ENCODE measurements at regions of chr4 and their contacts with region 1.

Region 1: DNA sequence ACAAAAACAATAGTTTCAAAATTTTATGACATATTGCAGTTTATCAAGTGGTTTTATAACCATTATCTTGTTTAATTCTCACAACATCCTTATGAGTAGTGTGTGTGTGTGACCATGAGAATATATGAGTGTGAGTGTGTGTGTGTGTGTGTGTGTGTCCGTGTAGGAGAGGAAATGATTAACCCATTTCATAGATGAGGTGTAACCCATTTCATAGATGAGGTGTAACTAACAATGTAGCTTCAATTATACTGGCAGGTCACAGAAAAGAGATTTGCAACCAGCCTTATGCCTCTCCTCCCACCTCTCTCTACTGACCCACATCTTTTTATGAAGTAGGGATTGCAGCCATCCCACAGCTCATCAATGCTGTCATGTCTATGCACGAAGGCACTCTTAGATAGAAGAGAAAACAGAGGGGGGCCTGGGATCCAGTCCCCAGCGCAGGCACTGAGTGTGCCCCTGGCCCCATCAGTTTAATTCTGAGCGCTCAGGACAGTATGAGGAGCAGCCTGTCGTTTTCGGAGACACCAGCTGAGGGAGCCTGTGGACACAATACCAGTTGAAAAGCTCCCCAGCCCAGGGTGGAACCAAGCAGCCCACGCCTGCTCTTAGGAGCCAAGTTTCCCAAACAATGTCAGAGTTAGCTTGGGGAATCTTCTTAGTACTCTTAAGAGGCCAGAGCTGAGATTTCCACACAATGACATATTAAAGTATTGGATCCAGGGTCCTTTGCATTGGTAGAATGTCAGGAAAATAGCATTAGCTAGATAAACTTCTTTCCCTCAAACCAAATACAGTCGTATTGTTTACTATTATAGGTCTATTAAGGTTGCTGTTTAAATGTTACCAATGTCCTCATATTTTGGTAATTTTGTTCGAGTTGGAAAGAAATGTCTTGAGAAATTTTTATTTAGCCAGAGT is 88.6 kb downstream of the PALLD start:
- DNase-seq: peak; percentile 93
- H3K4me3 ChIP-seq: no peak overlapping the region
- H3K27ac ChIP-seq: peak overlapping the region in 2 of 4 donors; percentile 21 to 85
- H3K4me1 ChIP-seq: peaks cover 0 to 41% (median 29%) of the 10 kb centered on the region in 4 donors
- H3K27me3 ChIP-seq: no peaks in the 10 kb centered on the region
- CTCF ChIP-seq: peak; percentile 68 to 84 (median 74)
- EP300 ChIP-seq: no peak
- POLR2A ChIP-seq: no peak

Region 2: DNA sequence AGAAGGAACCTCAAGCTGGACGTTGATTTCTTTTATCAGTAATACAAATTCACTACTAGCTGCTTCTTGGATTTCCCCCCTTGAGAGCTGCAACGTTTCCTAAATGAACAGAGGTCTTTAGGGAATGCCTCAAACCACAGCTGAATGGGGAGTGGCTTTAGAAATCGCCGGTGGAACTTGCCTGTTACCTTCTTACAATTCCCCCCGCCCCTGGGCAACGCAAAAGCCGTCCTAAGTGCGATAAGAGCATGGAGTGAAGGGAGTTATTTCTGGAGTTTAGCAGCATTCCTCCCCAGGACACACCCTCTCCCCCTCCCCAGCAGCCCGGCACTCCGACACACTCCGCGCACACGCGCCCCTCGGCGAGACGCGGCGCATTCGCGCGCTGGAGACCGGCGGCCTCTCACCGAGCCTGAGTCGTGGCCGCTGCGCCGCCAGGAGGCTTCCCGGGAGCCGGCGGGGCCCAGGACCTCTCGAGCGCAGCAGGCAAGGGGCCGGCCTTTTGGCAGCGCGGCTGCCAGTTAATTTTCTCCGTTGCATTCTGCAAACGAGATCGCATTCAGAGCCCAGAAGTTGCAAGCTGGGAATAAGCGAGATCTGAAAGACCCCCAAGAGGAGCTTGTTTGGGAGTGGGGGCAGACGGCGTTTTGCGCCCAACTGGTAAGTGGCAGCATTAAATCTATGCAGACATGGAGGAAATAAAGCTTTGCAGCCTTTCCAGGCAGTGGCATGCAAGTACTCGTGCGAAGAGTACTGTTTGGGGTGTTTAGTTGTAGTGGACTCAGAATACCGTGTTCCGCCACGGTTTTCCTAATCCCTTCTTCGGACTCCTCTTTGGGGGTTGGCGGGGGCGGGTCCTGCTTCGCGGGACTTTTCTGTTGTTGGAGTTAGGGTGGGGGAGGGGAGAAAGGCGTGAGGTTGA is 46.1 kb after region 1 on chr4:
- intact Hi-C with region 1: loop called (anchors 2 kb)
- DNase-seq: peak; percentile 86
- H3K4me3 ChIP-seq: peak overlapping the region; percentile 51 to 65 (median 60)
- H3K27ac ChIP-seq: peak overlapping the region; percentile 70 to 93 (median 83)
- H3K4me1 ChIP-seq: peaks cover 0 to 46% (median 39%) of the 10 kb centered on the region in 4 donors
- H3K27me3 ChIP-seq: no peaks in the 10 kb centered on the region
- CTCF ChIP-seq: peak; percentile 38 to 67 (median 56)
- EP300 ChIP-seq: no peak
- POLR2A ChIP-seq: no peak

Region 3: DNA sequence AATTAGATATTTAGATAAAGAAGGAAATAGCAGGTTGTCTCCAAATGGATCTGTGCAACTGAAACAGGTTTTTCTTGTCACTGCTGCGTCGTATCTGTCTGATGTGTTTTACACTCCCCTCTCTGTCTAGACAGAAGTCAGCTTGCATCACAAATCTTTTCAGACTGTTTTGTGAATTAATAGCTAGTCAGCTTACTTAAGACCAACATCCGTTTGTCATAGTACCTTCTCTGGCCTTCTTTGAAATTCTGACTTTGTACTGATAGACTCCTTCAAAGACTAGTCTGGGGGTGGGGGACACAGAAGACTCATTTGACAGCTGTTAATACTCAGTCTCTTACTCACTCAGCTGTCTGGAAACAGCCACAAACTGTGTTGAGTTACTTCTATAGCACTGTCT is 109.2 kb after region 1 on chr4:
- intact Hi-C with region 1: loop called (anchors 5 kb)
- DNase-seq: no peak
- H3K4me3 ChIP-seq: no peak overlapping the region
- H3K27ac ChIP-seq: peak overlapping the region in 2 of 4 donors; percentile 3 to 32
- H3K4me1 ChIP-seq: peaks cover 0 to 4% (median 0%) of the 10 kb centered on the region in 4 donors
- H3K27me3 ChIP-seq: no peaks in the 10 kb centered on the region
- CTCF ChIP-seq: no peak
- EP300 ChIP-seq: no peak
- POLR2A ChIP-seq: no peak

Region 4: DNA sequence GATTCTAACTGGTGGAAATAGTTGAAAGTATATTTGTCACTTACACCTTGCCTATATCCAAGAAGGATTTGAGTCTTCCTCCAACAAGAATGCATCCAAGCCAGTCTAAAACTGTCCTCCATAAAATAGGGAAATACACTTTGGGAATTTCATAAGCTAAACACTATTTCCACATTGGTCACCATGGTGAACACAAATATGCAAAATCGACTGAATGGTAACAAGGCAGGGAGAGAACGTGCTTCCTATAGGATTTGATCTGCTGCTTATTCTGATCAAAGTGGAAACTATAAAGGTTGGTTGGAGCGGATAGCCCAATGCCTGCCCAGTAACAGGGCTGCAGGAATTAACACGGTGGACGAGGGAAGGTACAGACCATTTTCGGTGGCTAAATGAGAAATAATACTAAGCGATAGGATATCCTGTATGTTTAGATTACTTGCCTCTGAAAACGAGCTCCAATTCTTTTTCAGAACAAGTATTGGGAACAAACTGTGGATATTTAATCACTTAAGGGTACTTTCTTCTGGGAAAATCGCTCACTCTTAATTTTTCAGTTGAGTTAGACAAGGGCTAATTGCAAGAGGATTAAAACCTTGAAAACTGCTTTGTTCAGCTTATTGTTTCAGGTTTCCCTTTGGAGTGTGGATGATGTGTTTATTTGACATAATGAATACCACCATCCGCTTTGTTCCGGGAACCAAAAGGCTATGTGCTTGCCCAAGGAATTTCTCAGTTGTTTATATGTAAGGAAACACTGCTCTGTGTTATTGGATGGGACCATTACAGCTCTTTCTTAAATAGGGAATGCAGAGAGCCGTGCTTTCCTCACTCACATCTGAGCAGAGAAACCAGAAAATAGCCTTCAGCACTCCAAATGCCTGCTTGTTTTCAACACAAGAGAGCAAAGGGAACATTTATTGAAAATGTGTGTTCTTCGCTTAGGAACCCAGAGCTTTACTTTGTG is 230.2 kb after region 1 on chr4:
- intact Hi-C with region 1: loop called (anchors 10 kb)
- DNase-seq: peak; percentile 70
- H3K4me3 ChIP-seq: peak overlapping the region in 3 of 4 donors; percentile 17 to 30 (median 28)
- H3K27ac ChIP-seq: peak overlapping the region; percentile 83 to 94 (median 86)
- H3K4me1 ChIP-seq: peaks cover 0 to 84% (median 65%) of the 10 kb centered on the region in 4 donors
- H3K27me3 ChIP-seq: no peaks in the 10 kb centered on the region
- CTCF ChIP-seq: no peak
- EP300 ChIP-seq: peak; percentile 74 to 97 (median 92)
- POLR2A ChIP-seq: no peak

Region 5: GRCh38 chr4:168877511-168878491 is 292.4 kb after region 1 on chr4:
- intact Hi-C with region 1: loop called (anchors 10 kb)
- DNase-seq: peak; percentile 72
- H3K4me3 ChIP-seq: peak overlapping the region; percentile 23 to 49 (median 43)
- H3K27ac ChIP-seq: peak overlapping the region; percentile 77 to 99 (median 88)
- H3K4me1 ChIP-seq: peaks cover 0 to 100% (median 94%) of the 10 kb centered on the region in 4 donors
- H3K27me3 ChIP-seq: no peaks in the 10 kb centered on the region
- CTCF ChIP-seq: no peak
- EP300 ChIP-seq: no peak
- POLR2A ChIP-seq: no peak

Region 6: DNA sequence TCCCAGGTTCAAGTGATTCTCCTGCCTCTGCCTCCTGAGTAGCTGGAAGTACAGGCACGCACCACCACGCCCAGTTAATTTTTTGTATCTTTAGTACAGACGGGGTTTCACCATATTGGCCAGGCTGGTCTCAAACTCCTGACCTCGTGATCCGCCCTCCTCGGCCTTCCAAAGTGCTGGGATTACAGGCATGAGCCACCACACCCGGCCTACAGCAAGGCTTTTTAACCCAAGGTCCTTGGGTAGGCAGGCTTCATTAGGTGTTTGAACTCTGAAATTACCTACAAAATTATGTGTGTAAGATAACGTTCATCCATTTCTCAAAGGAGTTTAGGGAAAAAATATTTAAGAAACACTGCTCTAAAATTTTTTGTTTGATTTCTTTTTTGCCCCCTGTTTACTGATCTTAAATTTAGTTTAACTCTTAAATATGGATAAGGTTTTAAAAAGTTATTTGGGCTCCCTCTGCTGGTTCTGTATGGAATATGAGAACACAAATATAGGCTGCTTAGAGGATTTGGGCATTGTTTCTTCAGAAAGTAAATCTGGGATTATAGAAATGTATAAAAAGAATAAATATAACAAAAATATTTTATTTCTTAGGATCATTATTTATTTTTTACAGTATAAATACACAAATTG is 331.8 kb after region 1 on chr4:
- intact Hi-C with region 1: loop called (anchors 2 kb)
- DNase-seq: no peak
- H3K4me3 ChIP-seq: no peak overlapping the region
- H3K27ac ChIP-seq: peak overlapping the region; percentile 30 to 76 (median 64)
- H3K4me1 ChIP-seq: peaks cover 0 to 43% (median 38%) of the 10 kb centered on the region in 4 donors
- H3K27me3 ChIP-seq: no peaks in the 10 kb centered on the region
- CTCF ChIP-seq: peak; percentile 40 to 51 (median 44)
- EP300 ChIP-seq: no peak
- POLR2A ChIP-seq: no peak

Region 7: DNA sequence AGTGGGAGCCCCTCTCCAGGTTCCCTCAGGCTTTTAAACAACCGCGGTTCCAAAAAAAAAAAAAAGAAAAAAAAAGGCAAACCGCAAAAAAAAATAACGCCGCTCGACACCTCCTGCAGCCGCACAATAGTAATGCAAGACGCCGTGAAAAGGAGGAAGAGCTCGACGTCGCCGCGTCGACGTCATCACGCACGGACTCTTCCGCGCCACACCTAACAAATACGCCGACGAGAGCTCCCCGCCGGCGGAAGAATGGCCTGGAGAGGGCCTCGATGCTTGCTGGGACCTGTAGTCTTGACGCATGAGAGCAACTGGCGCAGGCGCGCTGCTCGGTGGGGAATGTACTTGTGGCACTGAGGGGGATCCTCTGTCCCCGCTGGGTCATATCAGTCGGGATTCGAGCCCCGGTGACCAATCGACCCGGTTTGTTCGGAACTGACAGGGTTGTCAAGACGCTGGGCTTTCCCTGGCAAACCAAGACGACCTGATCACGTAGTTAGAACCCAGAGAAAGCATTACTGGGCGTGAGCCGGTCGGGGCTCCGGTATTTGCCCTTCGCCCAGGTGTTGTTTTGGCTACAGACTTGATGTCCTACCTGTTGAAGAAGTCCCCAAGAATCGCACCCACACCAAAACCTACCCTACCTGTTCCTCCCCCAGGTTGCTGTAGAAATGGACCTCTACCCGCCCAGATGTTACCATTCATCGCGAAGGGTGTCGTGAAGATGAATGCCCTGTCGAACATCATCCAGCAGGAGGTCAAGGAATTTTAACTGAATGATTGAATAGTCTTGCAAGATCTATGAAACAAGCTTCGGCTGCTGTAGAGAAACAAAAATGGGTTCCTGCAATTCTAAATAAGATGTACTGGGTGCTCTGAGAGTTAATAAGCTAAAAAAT is 424.9 kb after region 1 on chr4 and contains the start of gene CBR4:
- intact Hi-C with region 1: loop called (anchors 10 kb)
- DNase-seq: peak; percentile 99
- H3K4me3 ChIP-seq: peak within 1 kb of the TSS; percentile 64 to 72 (median 69)
- H3K27ac ChIP-seq: peak within 1 kb of the TSS; percentile 92 to 96 (median 93)
- H3K4me1 ChIP-seq: peaks cover 0 to 31% (median 18%) of the 10 kb centered on the region in 4 donors
- H3K27me3 ChIP-seq: no peaks in the 10 kb centered on the region
- CTCF ChIP-seq: peak; percentile 8 to 52 (median 17)
- EP300 ChIP-seq: peak in 1 of 4 donors; percentile 22
- POLR2A ChIP-seq: peak; percentile 78 to 81
- total RNA-seq, gene CBR4: 13.4 to 23.9 (median 20.6) TPM